HEK293 (cell line): ENCODE measurements at regions of chr5 and their contacts with region 1.

Region 1: GRCh38 chr5:124748687-124749594 is 2.5 kb upstream of the ZNF608 start:
- H3K4me3 ChIP-seq: peak overlapping the region; percentile 82
- H3K27ac ChIP-seq: peak overlapping the region; percentile 99
- H3K4me1 ChIP-seq: peaks cover 29% of the 10 kb centered on the region
- CTCF ChIP-seq: peak; percentile 44; the same call in 1 of the 2 replicates

Region 2: DNA sequence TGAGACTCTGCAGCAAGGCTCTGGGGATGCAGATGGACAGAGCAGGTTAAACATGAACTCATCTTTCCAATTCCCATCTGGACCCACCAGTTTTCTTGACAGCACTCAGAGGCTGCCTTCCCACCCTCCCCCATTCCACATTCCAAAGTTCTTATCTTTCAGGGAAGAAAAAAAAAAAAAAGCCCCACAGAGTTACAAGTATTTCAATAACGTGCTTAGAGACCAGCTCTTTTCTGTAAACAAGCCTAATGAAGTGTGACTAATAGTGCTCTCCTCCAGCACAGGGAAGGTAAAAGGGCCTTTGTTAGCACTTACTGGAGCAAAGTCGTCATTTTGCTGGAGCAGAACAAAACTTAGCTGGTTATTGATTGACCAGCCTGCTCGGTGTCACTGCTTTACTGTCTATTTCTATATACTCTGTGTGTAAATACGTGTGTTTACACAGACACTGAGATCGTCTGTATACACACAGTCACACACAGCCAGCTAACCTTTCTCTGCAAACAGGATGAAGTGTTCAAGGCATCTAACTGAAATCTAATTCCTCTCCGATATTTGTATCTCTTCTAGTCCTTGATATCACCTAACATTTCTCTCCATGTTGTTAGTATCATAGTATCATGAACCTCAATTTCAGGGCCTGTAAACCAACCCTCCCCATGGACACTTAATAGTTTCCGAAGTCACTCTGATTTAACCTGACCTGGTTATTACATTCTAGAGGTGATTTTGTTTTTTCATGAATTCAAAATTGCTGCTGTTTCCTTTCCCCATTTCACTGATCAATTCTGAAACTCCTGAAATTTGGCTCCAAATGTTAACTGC is 87.4 kb before region 1 on chr5:
- CTCF ChIA-PET with region 1: interaction called, 5 read pairs
- POLR2A ChIA-PET with region 1: interaction called, 12 read pairs
- H3K4me3 ChIP-seq: peak overlapping the region; percentile 10; the same call in 1 of the 2 replicates
- H3K27ac ChIP-seq: peak overlapping the region; percentile 95
- H3K4me1 ChIP-seq: peaks cover 71% of the 10 kb centered on the region
- CTCF ChIP-seq: no peak

Region 3: DNA sequence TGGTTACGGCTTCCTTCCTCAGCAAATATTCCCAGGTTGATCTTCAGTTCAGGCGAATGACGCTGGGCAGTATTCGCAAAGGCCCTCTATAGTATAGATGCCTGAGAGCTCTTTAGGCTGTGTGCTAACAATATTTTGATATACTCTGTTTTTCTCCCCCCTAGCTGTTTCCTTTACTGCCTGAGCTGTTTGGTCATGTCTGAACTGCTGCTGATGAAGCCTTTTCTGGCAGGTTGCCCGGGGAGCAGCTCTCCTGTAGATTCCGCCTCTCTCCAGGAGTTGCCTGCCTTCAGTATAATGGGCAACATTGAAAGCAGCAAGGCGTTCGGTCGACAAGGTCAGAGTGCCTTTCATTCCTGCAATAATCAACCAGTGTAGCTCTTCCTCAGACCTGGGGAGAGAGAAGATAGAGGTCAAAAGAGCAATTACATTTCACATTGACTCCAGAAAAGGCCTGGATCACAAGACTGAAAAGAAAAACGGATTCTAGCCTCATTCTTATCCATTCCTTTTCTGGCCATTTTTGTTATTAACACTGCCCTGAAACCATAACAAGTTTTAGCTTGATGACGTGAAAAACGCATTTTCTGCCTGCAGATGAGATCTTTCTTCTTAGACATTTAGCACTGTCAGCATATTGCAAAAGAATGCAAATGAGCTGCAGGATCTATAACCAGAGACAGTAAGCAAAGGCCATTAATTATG is 57.6 kb after region 1 on chr5:
- CTCF ChIA-PET with region 1: no interaction called
- POLR2A ChIA-PET with region 1: interaction called, 19 read pairs
- H3K4me3 ChIP-seq: no peak overlapping the region
- H3K27ac ChIP-seq: peak overlapping the region; percentile 81
- H3K4me1 ChIP-seq: peaks cover 9% of the 10 kb centered on the region
- CTCF ChIP-seq: no peak

Region 4: DNA sequence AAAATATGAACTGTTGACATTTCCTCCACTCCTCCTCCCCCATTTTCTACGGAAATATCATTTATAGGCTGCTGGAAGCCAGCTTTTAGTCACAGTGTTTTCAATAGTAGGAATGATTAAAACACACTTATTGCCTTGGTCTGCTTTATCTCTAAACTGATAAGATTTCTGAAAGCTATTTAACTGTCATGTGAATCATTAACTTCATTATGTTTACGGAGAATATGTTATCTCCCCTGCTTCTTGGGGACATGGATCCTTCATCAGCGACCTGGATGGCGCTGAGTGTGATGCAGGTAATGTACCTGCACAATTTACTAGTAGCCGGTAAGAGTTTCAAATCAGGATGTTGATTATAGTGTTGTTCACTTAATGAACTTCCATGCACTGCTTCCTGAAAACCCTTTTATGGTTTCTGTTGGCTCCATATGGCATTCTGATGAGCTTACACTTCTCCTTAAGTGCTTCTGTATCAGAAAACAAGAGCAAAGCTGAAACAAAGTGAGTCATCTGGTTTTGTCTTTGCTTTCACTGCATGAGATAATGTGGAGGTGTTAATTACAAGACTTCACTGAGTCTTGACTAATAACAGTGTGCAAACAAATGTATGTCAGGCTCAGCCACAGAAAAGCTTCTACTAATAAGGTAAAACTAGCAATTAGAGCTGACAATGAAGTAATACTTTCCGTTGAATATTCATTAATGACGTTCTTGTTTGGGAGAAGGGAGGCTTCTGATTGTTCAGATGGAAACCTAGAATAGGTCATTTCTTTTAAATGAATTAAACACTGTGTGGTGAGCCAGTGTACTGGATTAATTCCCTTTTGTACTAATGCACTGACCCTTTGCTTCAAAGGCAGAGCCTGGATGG is 159.9 kb after region 1 on chr5:
- CTCF ChIA-PET with region 1: interaction called, 3 read pairs
- POLR2A ChIA-PET with region 1: interaction called, 15 read pairs
- H3K4me3 ChIP-seq: no peak overlapping the region
- H3K27ac ChIP-seq: peak overlapping the region; percentile 80
- H3K4me1 ChIP-seq: peaks cover 47% of the 10 kb centered on the region
- CTCF ChIP-seq: no peak

Region 5: GRCh38 chr5:125070961-125071360 is 322.0 kb after region 1 on chr5:
- CTCF ChIA-PET with region 1: no interaction called
- POLR2A ChIA-PET with region 1: interaction called, 10 read pairs
- H3K4me3 ChIP-seq: no peak overlapping the region
- H3K27ac ChIP-seq: no peak overlapping the region
- H3K4me1 ChIP-seq: peaks cover 2% of the 10 kb centered on the region; the same call in 1 of the 2 replicates
- CTCF ChIP-seq: no peak

Region 6: GRCh38 chr5:125408582-125409505 is 659.9 kb after region 1 on chr5:
- CTCF ChIA-PET with region 1: no interaction called
- POLR2A ChIA-PET with region 1: interaction called, 19 read pairs
- H3K4me3 ChIP-seq: no peak overlapping the region
- H3K27ac ChIP-seq: peak overlapping the region; percentile 89
- H3K4me1 ChIP-seq: peaks cover 36% of the 10 kb centered on the region
- CTCF ChIP-seq: no peak